Testis (tissue), 5 donors: ENCODE measurements at regions of chr16 and their contacts with region 1.

Region 1: GRCh38 chr16:68085259-68086071 is at the start of gene NFATC3:
- DNase-seq: peak; percentile 99
- H3K4me3 ChIP-seq: peak within 1 kb of the TSS; percentile 85 to 98
- H3K27ac ChIP-seq: peak within 1 kb of the TSS; percentile 98 to 99
- H3K4me1 ChIP-seq: peaks cover 37% of the 10 kb centered on the region
- H3K27me3 ChIP-seq: no peaks in the 10 kb centered on the region
- CTCF ChIP-seq: no peak
- POLR2A ChIP-seq: no peak
- total RNA-seq, gene NFATC3: 94.7 to 115 TPM

Region 2: DNA sequence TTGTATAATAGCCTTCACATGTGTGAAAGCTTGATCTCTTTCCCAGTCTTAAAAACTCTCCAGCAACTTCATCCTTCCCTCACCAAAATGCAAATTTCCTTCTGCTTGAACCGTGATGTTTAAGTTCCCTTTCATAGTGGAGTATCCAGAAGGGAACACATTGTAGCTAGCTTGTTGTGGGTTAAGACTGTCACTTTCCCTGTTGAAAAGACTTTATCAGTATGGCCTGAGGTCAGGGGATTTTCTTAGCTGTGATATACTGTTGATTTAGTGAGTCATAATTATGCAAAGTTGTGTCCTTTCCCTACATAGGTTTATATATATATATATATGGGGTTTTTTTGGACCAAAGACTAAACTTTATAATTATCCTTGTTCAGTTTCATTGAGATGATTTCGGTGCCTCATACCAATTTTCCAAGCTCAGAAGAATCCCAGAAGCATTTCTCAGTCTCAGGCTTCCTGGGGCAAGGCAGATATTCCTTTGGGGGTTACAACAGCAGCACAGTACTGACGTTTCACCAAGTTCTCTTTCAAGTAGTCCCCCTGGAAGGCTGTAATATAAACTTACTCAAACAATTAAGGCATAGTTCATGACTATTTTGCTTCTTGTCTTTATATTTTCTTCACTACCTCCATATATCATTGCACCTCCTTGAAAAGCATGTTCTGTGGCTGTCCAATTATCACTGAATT is 114.8 kb after region 1 on chr16:
- intact Hi-C with region 1: no loop called
- DNase-seq: no peak
- H3K4me3 ChIP-seq: no peak overlapping the region
- H3K27ac ChIP-seq: no peak overlapping the region
- H3K4me1 ChIP-seq: peaks cover 3% of the 10 kb centered on the region
- H3K27me3 ChIP-seq: no peaks in the 10 kb centered on the region
- CTCF ChIP-seq: no peak
- POLR2A ChIP-seq: no peak

Region 3: GRCh38 chr16:68237243-68238028 is 152.0 kb after region 1 on chr16:
- intact Hi-C with region 1: loop called (anchors 10 kb)
- DNase-seq: peak; percentile 98
- H3K4me3 ChIP-seq: peak overlapping the region; percentile 58 to 66
- H3K27ac ChIP-seq: peak overlapping the region; percentile 33 to 85
- H3K4me1 ChIP-seq: peaks cover 13% of the 10 kb centered on the region
- H3K27me3 ChIP-seq: no peaks in the 10 kb centered on the region
- CTCF ChIP-seq: peak in 1 of 3 experiments; percentile 17
- POLR2A ChIP-seq: no peak